Activated CD8-positive, alpha-beta memory T cell treated with anti-CD3 and anti-CD28 coated beads, Interleukin-2, amount 10 ng/mL, durations not matched to agents 7 days and 5 days (primary cell): ENCODE measurements at regions of chr13 and their contacts with region 1.

Region 1: GRCh38 chr13:97344265-97345175 is 89.4 kb upstream of the RAP2A start:
- DNase-seq: peak; percentile 63
- ATAC-seq: peak; percentile 65
- H3K4me3 Mint-ChIP-seq: no peak overlapping the region
- H3K27ac Mint-ChIP-seq: no peak overlapping the region
- H3K4me1 Mint-ChIP-seq: peaks cover 11% of the 10 kb centered on the region
- H3K27me3 Mint-ChIP-seq: no peaks in the 10 kb centered on the region

Region 2: DNA sequence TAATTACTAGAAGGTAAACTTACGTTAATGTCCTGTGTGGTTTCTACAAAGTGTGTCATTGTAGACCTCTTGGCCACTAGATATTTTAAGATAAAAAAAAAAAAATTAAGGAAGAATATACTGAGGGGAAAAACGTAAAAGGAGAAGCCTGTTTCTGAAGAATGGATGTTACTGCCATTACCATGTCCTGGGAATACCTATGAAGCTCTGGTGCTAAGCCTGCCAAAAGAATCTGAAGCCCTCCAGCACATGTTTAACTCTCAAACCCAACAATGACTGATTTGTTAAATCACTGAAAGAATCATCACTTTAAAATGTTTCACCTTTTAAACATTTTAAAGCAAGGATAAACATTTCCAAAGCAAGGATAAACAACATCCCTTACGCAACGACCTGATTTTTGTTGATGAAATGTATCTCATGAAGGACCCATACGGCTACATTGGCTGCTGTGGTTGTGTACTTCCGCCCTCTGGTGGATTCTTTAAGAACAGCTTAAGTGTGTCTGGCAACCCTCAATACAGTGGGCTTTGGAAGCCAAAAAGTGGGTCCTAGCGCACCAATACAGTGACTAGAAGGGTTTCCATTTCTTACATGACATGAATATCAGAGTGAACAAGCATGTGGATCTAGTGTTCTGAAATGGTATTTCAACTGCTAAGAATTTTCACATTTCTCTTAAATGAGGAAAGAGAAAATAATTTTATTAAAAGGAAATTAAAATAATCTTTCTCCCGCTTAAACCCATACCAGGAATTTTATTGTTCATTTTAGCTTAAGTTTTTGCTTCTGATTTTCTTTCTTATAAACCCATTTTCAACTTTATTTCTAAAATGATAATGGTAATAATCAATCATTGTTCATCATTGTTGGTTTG is 14.9 kb after region 1 on chr13:
- CTCF ChIA-PET with region 1: interaction called, 10 read pairs
- DNase-seq: peak; percentile 61
- ATAC-seq: peak; percentile 89
- H3K4me3 Mint-ChIP-seq: no peak overlapping the region
- H3K27ac Mint-ChIP-seq: no peak overlapping the region
- H3K4me1 Mint-ChIP-seq: no peaks in the 10 kb centered on the region
- H3K27me3 Mint-ChIP-seq: no peaks in the 10 kb centered on the region

Region 3: GRCh38 chr13:97460004-97460775 is 115.7 kb after region 1 on chr13:
- CTCF ChIA-PET with region 1: no interaction called
- DNase-seq: no peak
- ATAC-seq: no peak
- H3K4me3 Mint-ChIP-seq: no peak overlapping the region
- H3K27ac Mint-ChIP-seq: no peak overlapping the region
- H3K4me1 Mint-ChIP-seq: peaks cover 30% of the 10 kb centered on the region
- H3K27me3 Mint-ChIP-seq: no peaks in the 10 kb centered on the region